ENCODE measurements at regions of chr10 and their contacts with region 1.

Region 1: DNA sequence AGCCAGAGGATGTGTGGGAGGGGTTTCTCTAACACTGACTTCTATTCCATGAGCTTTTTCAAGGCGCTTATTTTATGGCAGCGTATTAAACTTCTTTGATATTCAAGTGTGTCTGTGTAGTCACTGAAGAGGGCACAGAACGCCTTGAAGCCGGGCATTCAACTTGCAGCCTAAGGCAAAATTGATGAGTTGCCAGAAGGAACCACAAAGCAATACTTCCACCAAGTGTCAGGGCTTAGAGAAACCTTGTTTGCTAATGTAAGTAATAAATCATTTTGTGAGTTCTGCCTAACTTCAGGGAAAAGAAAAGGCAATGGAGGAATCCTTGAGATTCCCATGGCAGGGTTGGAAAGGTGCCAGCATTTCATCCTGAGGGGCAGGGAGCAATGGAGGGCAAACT is 163.8 kb downstream of the LCOR start:
- DNase-seq: no peak

Region 2: GRCh38 chr10:97037365-97038361 is 41.8 kb after region 1 on chr10:
- intact Hi-C with region 1: loop called in 1 of 2 experiments (anchors 1 kb)
- DNase-seq: peak; percentile 89

Region 3: DNA sequence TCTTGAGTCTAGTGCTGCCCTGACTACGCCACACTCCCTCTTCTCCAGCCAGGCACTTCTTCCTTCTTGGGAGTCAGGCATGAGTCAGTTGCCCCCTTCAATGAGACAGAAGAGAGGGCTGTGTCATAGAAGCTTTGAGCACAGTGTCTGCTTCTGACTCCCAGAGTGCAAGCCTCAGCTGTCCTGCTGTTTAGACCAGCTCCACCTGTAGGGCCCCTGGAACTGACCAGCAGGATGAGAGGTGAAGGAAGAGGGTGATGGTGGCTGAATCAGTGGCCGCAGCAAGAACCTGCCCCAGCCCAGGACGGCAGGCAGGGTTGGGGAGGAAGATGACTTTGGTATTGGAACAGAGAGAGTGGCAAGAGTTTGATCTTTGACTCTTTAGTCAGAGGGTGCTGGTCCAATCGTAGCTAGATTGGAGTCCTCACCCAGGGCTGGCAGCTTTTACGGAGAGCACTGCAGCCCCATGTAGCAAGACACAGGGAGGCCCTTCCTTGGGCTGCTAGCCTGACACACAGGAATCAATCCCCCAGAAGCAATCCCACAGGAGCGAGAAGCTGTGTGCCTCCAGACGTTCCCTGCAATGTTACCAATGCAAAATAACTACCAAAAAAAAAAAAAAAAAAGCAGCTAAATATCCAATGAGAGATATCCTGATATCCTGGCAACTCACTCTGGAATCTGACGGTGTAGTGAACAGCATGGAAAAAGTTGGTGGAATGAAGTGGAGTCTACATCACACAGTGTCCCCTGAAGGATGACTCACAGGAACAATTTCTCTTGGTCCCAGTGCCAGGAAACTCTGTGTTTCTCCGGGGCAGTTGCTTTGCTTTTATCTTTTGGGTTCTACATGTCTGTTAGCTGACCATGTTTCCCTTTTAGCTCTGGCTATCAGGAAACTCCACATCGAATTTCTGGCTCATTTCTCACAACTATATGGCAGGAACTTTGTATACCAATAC is 600.5 kb after region 1 on chr10:
- intact Hi-C with region 1: no loop called
- DNase-seq: no peak